T-cell (primary cell): ENCODE measurements at regions of chr10 and their contacts with region 1.

Region 1: DNA sequence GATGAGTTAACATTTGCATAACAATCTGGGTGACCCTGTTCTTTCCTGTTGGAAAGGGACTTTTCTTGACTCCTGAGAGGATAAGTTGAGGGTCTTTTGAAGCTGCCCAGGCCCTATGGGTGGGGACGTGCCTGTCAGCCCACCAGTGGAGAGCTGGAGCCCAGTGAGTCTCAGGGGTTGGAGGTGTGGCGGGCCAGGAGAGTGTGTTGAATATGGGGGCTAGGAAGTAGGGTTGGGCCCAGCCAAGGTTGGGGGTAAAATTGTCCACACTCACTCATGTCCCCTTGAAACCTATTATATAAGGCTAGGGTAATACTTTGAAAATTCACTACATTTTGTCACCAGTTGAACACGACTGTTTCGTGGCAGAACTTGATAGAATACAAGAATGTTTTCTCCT is 17.9 kb upstream of the KAT6B start:
- DNase-seq: no peak
- ATAC-seq: no peak
- H3K4me3 ChIP-seq: no peak overlapping the region
- H3K4me3 Mint-ChIP-seq: no peak overlapping the region
- H3K27ac ChIP-seq: no peak overlapping the region
- H3K27ac Mint-ChIP-seq: no peak overlapping the region
- H3K4me1 ChIP-seq: no peaks in the 10 kb centered on the region
- H3K4me1 Mint-ChIP-seq: no peaks in the 10 kb centered on the region
- H3K27me3 ChIP-seq: peaks cover 0 to 5% of the 10 kb centered on the region in 2 experiments
- H3K27me3 Mint-ChIP-seq: no peaks in the 10 kb centered on the region

Region 2: GRCh38 chr10:74797550-74797949 is 11.0 kb before region 1 on chr10:
- CTCF ChIA-PET with region 1: no interaction called
- POLR2A ChIA-PET with region 1: interaction called in 1 of 2 experiments, 10 read pairs
- DNase-seq: no peak
- ATAC-seq: no peak
- H3K4me3 ChIP-seq: no peak overlapping the region
- H3K4me3 Mint-ChIP-seq: no peak overlapping the region
- H3K27ac ChIP-seq: no peak overlapping the region
- H3K27ac Mint-ChIP-seq: no peak overlapping the region
- H3K4me1 ChIP-seq: peaks cover 0 to 3% of the 10 kb centered on the region in 2 experiments
- H3K4me1 Mint-ChIP-seq: peaks cover 7 to 12% (median 8%) of the 10 kb centered on the region in 3 donors
- H3K27me3 ChIP-seq: no peaks in the 10 kb centered on the region
- H3K27me3 Mint-ChIP-seq: no peaks in the 10 kb centered on the region